ENCODE measurements at regions of chr9 and their contacts with region 1.

Region 1: GRCh38 chr9:5582835-5583195 is 46.1 kb upstream of the RIC1 start:
- DNase-seq: peak in 12 of 14 experiments; percentile 10 to 81 (median 30)
- ATAC-seq: peak; percentile 92
- H3K4me3 ChIP-seq: no peak overlapping the region
- H3K4me3 Mint-ChIP-seq: peak overlapping the region; percentile 1
- H3K27ac ChIP-seq: peak overlapping the region in 1 of 2 donors; percentile 16
- H3K27ac Mint-ChIP-seq: peak overlapping the region; percentile 81
- H3K4me1 ChIP-seq: peaks cover 32% of the 10 kb centered on the region
- H3K4me1 Mint-ChIP-seq: peaks cover 70% of the 10 kb centered on the region
- H3K27me3 ChIP-seq: no peaks in the 10 kb centered on the region
- H3K27me3 Mint-ChIP-seq: no peaks in the 10 kb centered on the region
- CTCF ChIP-seq: no peak

Region 2: GRCh38 chr9:5450359-5451091 is 132.3 kb before region 1 on chr9 and contains the start of gene CD274:
- CTCF ChIA-PET with region 1: interaction called, 5 read pairs
- POLR2A ChIA-PET with region 1: interaction called, 93 read pairs
- intact Hi-C with region 1: no loop called
- DNase-seq: peak; percentile 57 to 92 (median 70)
- ATAC-seq: peak; percentile 94
- H3K4me3 ChIP-seq: peak within 1 kb of the TSS; percentile 69
- H3K4me3 Mint-ChIP-seq: peak within 1 kb of the TSS; percentile 88
- H3K27ac ChIP-seq: peak within 1 kb of the TSS; percentile 77 to 87
- H3K27ac Mint-ChIP-seq: peak within 1 kb of the TSS; percentile 95
- H3K4me1 ChIP-seq: peaks cover 34% of the 10 kb centered on the region
- H3K4me1 Mint-ChIP-seq: peaks cover 74% of the 10 kb centered on the region
- H3K27me3 ChIP-seq: no peaks in the 10 kb centered on the region
- H3K27me3 Mint-ChIP-seq: no peaks in the 10 kb centered on the region
- CTCF ChIP-seq: peak; percentile 76
- total RNA-seq, gene CD274: 5.3 to 6.3 TPM

Region 3: DNA sequence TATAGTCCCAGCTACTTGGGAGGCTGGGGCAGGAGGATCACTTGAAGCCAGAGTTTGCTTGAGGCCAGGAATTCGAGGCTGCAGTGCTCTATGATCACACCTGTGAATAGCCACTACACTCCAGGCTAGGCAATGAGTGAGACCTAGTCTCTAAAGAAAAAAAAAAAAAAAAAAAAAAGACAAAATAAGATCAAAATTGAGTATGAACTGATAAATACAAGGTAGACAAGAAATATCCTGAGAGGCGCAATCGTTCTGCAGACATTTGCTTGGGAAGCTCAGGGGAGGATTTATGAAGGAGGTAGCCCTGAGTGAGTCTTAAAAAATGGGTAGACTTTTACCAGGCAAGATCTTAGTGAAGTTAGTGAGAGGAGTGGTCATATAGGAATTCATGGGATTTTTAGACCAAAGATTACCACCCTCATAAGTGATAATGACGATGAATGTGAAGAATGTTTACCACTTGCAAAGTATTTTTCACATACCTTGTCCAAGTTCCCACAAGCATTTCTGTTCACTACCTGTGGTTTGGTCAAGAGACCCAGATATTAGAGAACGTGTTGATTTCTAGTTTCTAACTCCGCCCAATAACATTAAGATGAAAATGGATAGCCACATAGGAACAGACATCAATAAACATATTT is 68.1 kb before region 1 on chr9:
- CTCF ChIA-PET with region 1: no interaction called
- POLR2A ChIA-PET with region 1: no interaction called
- intact Hi-C with region 1: loop called in 1 of 2 experiments (anchors 2 kb)
- DNase-seq: no peak
- ATAC-seq: no peak
- H3K4me3 ChIP-seq: no peak overlapping the region
- H3K4me3 Mint-ChIP-seq: no peak overlapping the region
- H3K27ac ChIP-seq: no peak overlapping the region
- H3K27ac Mint-ChIP-seq: no peak overlapping the region
- H3K4me1 ChIP-seq: peaks cover 20% of the 10 kb centered on the region
- H3K4me1 Mint-ChIP-seq: peaks cover 44% of the 10 kb centered on the region
- H3K27me3 ChIP-seq: no peaks in the 10 kb centered on the region
- H3K27me3 Mint-ChIP-seq: no peaks in the 10 kb centered on the region
- CTCF ChIP-seq: no peak